Right cardiac atrium (tissue), 5 donors: ENCODE measurements at regions of chr12 and their contacts with region 1.

Region 1: DNA sequence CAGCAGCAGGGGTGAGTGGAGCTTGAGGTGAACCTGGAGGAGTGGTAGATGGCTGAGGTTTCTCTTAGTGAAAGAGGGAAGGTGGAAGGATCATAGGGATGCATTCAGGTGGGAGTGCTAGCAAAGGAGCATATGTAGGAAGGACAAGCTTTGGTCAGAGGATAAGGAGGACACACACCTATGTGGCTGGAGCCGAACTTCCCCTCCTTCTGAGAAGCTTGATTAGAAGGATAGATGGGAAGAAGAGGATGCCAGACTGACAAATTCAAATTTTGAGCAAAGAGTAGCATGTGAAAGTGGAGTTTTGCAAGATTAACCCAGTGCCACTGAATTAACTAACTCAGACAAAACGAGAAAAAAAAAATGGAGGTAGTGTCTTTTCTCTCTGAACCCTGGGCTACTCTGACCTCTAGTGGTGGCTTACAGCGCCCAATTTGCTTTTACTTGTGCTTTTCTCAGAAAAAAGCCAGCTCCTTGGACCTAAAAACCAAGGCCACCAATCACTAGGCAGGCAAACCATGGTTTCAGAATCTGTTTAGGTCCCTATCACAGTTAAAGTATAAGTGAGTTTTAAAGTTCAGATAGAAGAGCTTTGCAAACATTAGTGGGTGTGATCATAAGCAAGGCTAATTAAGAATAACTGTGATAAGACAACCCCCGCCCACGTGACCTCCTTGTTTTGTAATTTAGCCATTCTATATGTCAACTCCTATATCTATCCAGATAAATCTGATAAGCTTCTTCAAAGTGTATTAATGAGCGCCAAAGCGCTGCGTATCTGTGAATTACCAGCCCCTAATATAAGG is 15.5 kb downstream of the EMP1 start:
- DNase-seq: peak in 2 of 3 donors; percentile 33 to 69
- ATAC-seq: peak in 1 of 2 donors; percentile 13
- H3K4me3 ChIP-seq: no peak overlapping the region
- H3K27ac ChIP-seq: peak overlapping the region; percentile 48
- H3K4me1 ChIP-seq: peaks cover 15% of the 10 kb centered on the region
- H3K27me3 ChIP-seq: no peaks in the 10 kb centered on the region

Region 2: DNA sequence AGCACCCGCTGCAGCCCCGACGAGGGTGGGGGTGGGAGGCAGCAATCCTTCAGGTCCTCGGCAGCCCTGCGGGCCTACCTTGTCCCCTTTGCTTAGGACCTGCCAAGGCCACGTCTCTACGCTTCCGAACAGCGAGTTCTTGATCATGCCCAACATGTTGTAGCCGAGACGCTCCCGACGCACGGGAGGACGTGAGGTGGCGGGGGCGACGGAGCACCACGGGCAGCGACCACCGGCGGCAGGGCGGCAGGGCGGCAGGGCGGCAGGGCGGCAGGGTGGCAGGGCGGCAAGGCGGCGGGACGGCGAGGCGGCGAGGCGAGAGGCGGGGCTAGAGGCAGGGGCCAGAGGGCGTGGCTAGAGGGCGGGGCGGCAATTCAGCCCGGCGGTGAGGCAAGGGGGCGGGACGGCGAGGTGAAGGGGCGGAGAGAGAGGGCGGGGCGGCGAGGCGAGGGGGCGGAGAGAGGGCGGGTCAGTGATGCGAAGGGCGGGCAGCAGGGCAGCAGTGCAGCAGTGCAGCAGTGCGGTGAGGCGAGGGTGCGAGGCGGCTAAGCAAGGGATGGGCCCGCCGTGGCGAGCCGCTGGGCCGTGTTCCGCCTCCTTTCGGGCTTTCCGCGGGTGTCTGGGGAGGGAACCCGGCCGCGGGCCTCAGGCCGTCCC is 212.0 kb before region 1 on chr12 and contains the start of gene HEBP1:
- intact Hi-C with region 1: loop called in 2 of 4 experiments (anchors 10 kb)
- DNase-seq: peak; percentile 95 to 99 (median 98)
- ATAC-seq: peak; percentile 95 to 97
- H3K4me3 ChIP-seq: peak within 1 kb of the TSS; percentile 79
- H3K27ac ChIP-seq: peak within 1 kb of the TSS; percentile 83
- H3K4me1 ChIP-seq: peaks cover 18% of the 10 kb centered on the region
- H3K27me3 ChIP-seq: no peaks in the 10 kb centered on the region
- total RNA-seq, gene HEBP1: 54.4 to 81.0 (median 70.2) TPM